Activated naive CD4-positive, alpha-beta T cell treated with anti-CD3 and anti-CD28 coated beads for 36 hours (primary cell): ENCODE measurements at regions of chr2 and their contacts with region 1.

Region 1: GRCh38 chr2:202634556-202635427 is at the start of gene FAM117B:
- DNase-seq: peak; percentile 99
- H3K4me3 Mint-ChIP-seq: peak within 1 kb of the TSS; percentile 96
- H3K27ac Mint-ChIP-seq: peak within 1 kb of the TSS; percentile 96
- H3K4me1 Mint-ChIP-seq: peaks cover 50% of the 10 kb centered on the region
- H3K27me3 Mint-ChIP-seq: no peaks in the 10 kb centered on the region
- total RNA-seq, gene FAM117B: 12.3 to 14.2 TPM

Region 2: DNA sequence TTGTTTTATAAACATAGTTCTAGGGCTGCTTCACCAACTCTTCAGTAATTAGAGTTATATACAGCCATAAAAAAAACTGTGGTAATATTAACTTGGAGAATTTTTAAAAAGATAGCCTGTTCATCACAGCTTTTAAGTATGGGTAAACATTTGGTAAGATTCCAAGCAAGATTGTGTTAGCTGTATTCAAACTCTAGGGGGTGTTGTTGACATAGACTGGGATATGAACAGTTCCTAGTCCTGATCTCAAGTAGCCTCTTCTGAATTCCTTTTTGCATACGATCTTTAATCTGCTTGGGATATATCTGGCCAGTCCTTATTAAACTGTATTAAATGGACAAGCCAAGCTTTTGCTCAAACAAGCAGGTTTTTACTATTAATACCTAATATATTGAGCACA is 355.8 kb before region 1 on chr2:
- CTCF ChIA-PET with region 1: no interaction called
- intact Hi-C with region 1: loop called (anchors 1 kb)
- DNase-seq: no peak
- H3K4me3 Mint-ChIP-seq: no peak overlapping the region
- H3K27ac Mint-ChIP-seq: peak overlapping the region; percentile 92
- H3K4me1 Mint-ChIP-seq: peaks cover 51% of the 10 kb centered on the region
- H3K27me3 Mint-ChIP-seq: no peaks in the 10 kb centered on the region

Region 3: GRCh38 chr2:202491518-202491917 is 143.3 kb before region 1 on chr2:
- CTCF ChIA-PET with region 1: no interaction called
- intact Hi-C with region 1: no loop called
- DNase-seq: no peak
- H3K4me3 Mint-ChIP-seq: no peak overlapping the region
- H3K27ac Mint-ChIP-seq: no peak overlapping the region
- H3K4me1 Mint-ChIP-seq: no peaks in the 10 kb centered on the region
- H3K27me3 Mint-ChIP-seq: no peaks in the 10 kb centered on the region

Region 4: DNA sequence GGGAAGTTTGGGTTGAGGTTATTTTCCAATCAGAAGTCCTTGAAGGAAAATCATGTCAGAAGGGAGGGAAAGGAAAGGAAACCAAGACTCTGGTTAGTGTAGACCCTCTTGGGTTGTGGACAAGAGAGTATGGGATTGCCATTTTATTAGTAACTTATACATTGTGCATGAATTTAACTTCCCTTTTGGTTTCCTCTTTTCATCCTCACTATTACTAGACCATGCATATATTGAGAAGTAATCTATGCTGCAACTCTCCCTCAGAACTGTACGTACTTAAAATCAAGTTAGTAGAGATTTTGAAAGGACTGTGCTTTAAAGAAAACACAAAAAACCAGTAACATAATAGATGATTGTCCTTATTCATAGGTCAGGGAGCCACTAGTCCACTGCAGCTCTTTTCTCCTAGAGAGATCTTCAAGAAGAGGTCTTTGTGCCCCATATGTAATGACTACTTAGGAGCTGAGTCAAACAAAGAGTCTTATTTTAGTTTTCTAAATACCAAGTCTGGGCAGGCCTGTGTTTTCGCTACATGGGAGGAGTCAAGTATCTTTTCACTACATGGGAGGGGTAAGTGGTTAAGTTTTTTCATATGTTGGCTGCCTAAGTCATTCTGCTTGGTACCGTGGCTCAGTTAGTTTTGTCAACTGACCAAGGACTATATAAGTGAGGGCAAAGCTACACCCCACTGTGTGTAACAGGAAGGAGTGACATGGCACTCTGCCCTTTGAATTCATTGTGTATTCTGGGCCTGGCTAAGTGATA is 25.2 kb before region 1 on chr2:
- CTCF ChIA-PET with region 1: interaction called, 3 read pairs
- intact Hi-C with region 1: loop called (anchors 2 kb)
- DNase-seq: peak; percentile 32
- H3K4me3 Mint-ChIP-seq: no peak overlapping the region
- H3K27ac Mint-ChIP-seq: no peak overlapping the region
- H3K4me1 Mint-ChIP-seq: peaks cover 21% of the 10 kb centered on the region
- H3K27me3 Mint-ChIP-seq: no peaks in the 10 kb centered on the region

Region 5: DNA sequence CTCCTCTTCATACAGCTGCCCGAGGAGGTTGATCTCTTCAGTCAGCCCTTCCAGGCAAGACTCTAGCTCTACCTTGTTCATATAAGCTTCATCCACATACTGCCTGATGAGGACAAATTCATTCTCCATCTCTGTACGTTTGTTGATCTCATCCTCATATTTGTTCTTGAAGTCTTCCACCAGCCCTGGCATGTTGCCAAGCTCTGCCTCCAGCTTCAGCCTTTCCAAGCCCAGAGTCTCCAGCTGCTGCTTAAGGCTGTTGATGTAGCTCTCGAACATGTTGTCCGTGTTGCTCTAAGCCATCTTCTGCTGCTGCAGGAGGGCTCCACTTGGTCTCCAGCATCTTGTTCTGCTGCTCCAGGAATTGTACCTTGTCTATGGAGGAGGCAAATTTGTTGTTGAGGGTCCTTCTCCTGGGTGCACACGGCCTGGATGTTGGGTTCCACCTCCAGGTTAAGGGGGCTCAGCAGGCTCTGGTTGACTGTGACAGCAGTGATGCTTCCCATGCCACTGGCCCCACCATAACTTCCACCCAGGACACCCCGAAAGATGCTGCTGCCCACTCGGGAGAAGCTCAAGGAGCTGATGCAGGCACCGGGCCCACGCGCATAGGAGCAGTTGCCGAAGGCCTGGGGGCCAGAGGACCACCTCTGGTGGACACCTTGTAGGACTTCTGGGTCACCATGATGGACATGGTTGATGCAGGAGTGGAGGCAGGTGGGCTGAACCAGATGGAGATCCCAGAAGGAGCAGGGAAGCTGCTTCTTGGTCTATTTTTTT is 206.5 kb after region 1 on chr2:
- CTCF ChIA-PET with region 1: no interaction called
- intact Hi-C with region 1: no loop called
- DNase-seq: no peak
- H3K4me3 Mint-ChIP-seq: no peak overlapping the region
- H3K27ac Mint-ChIP-seq: no peak overlapping the region
- H3K4me1 Mint-ChIP-seq: no peaks in the 10 kb centered on the region
- H3K27me3 Mint-ChIP-seq: no peaks in the 10 kb centered on the region

Region 6: DNA sequence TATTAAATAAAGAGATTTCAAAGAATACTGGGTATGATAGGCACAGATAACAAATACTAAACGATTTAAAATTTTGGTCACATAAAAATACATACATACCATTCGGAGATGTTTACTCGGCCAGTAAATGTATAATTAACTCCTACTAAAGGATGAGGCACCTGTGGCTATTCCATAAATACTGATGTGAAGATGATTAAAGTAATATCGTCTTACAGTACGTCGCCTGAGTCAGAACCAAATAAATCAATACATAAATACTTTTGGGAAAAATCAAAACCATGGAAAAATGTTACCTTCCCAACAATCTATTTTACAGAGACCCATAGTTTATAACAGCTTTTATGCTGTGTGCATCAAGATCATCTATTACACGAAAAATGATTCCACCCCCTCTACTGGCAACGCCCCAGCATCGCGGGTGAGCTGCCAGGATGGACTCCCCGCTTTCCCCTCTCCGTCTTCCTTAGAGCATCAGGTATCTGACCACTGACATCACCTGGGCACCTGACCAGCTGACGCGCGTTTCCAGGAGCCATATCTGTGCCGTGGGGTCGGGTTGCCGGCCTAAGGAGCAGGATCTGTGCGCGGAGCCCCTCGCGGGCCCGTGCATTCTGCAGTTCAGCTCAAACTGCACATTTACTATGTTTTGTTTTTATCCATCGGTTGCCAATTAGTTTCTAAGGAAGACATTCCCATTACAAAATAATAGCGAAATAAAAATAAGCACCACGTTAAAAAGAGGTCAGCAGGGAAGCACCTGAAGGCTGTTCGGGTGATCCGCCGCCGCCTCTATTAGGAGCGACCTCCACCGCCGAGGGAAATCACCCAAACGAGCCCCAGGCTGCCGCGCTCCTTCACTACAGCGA is 235.9 kb after region 1 on chr2:
- CTCF ChIA-PET with region 1: interaction called, 3 read pairs
- intact Hi-C with region 1: loop called (anchors 2 kb)
- DNase-seq: peak; percentile 85
- H3K4me3 Mint-ChIP-seq: peak overlapping the region; percentile 88
- H3K27ac Mint-ChIP-seq: peak overlapping the region; percentile 72
- H3K4me1 Mint-ChIP-seq: peaks cover 7% of the 10 kb centered on the region
- H3K27me3 Mint-ChIP-seq: no peaks in the 10 kb centered on the region

Region 7: GRCh38 chr2:203238704-203239526 is 604.1 kb after region 1 on chr2 and contains the start of gene CYP20A1:
- CTCF ChIA-PET with region 1: no interaction called
- intact Hi-C with region 1: loop called (anchors 1 kb)
- DNase-seq: peak; percentile 97
- H3K4me3 Mint-ChIP-seq: peak within 1 kb of the TSS; percentile 94
- H3K27ac Mint-ChIP-seq: peak within 1 kb of the TSS; percentile 98
- H3K4me1 Mint-ChIP-seq: peaks cover 35% of the 10 kb centered on the region
- H3K27me3 Mint-ChIP-seq: no peaks in the 10 kb centered on the region
- total RNA-seq, gene CYP20A1: 12.0 to 12.2 TPM

Region 8: DNA sequence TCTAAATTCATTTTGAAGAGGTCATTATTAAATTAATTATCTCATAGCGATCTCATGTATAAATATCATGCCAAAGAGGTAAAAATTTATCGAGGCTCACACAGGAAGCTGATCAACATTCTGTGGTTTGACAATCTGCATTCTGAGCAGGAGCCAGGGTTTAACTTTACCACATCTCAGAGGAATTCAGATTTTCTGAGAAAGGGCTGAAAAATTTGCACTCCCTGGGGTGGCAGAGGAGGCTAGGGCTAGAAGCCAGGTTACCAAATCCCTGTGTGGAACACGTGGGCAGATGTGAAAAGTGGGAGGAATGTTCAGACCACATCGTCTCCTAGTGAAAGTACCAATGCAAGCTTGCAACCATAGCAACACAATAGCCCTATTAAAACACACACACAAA is 1169.3 kb after region 1 on chr2:
- CTCF ChIA-PET with region 1: no interaction called
- intact Hi-C with region 1: loop called (anchors 5 kb)
- DNase-seq: peak; percentile 55
- H3K4me3 Mint-ChIP-seq: no peak overlapping the region
- H3K27ac Mint-ChIP-seq: peak overlapping the region; percentile 27
- H3K4me1 Mint-ChIP-seq: peaks cover 75% of the 10 kb centered on the region
- H3K27me3 Mint-ChIP-seq: no peaks in the 10 kb centered on the region

Region 9: GRCh38 chr2:204005940-204006721 is 1371.3 kb after region 1 on chr2:
- CTCF ChIA-PET with region 1: no interaction called
- intact Hi-C with region 1: loop called (anchors 5 kb)
- DNase-seq: peak; percentile 40
- H3K4me3 Mint-ChIP-seq: no peak overlapping the region
- H3K27ac Mint-ChIP-seq: peak overlapping the region; percentile 96
- H3K4me1 Mint-ChIP-seq: peaks cover 95% of the 10 kb centered on the region
- H3K27me3 Mint-ChIP-seq: no peaks in the 10 kb centered on the region